Esophagus muscularis mucosa (tissue), 4 donors: ENCODE measurements at regions of chr19 and their contacts with region 1.

Region 1: DNA sequence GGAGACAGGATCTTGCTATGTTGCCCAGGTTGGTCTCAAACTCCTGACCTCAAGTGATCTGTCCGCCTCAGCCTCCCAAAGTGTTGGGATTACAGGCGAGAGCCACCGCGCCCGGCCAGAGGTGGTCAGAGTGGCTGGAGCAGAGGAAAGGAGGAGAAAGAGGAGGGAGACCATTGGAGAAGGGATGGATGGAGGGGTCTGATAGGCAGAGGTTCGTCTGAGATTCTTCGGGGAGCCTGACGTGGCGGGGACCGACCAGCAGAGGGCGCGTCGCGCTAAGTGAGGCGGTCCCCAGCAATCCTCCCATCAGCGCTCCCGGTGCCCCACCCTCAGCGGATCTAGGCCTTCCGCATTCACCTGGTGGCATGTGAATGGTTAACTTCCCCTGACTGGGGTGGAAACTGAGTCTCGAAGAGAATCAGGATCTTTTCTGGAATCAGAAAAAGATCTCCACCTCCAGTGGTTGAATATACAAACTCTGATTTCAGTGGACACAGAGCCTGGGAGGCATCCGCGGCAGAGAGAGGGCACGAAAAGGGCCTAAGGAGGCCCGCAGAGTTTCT is 8.8 kb downstream of the GTPBP3 start:
- DNase-seq: no peak
- H3K4me3 ChIP-seq: no peak overlapping the region
- H3K27ac ChIP-seq: peak overlapping the region; percentile 38 to 69 (median 50)
- H3K4me1 ChIP-seq: peaks cover 28 to 39% (median 33%) of the 10 kb centered on the region in 4 donors
- H3K27me3 ChIP-seq: peaks cover 0 to 22% (median 0%) of the 10 kb centered on the region in 4 donors
- CTCF ChIP-seq: peak in 2 of 3 experiments; percentile 91 to 96
- EP300 ChIP-seq: no peak
- POLR2A ChIP-seq: no peak

Region 2: DNA sequence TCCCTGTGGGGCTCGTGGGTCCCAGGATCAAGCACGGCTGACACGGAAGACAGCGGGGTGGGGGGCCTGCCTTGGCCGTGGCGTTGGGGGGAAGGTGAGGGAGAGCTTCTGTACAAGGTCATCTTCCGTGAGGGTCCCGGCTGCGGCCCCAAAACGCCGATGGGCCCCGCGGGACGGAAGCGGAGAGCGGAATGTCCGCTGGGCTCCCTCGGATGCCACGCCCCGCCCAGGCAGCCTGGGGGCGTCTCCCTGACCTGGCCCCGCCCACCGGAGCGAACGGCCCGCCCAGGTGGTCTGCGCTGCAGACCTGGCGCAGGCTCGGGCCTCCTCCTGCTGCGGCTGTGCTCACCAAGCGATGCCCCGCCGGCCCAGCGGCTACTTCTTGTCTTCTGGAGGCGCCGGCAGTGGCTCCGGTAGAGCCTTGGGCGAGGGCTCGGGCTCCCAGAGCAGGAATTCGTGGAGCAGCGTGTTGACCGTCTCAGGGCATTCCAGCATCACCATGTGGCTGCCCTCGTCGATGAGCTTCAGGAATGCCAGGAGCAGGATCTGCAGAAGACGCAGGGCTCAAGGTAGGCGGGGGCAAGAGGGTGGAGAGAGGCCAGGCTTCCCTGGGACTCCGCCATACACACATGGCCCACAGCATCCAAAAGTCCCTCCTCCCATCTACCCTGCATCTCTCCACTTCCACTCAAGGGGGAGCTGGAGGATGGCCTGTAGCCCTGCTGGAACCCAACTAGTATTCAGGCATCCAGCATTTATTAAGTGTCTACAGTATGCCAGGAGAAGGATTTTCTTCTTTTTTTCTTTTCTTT is 53.7 kb before region 1 on chr19:
- intact Hi-C with region 1: no loop called
- DNase-seq: peak; percentile 92
- H3K4me3 ChIP-seq: peak overlapping the region; percentile 58 to 65 (median 62)
- H3K27ac ChIP-seq: peak overlapping the region; percentile 78 to 90 (median 84)
- H3K4me1 ChIP-seq: peaks cover 0 to 34% (median 21%) of the 10 kb centered on the region in 4 donors
- H3K27me3 ChIP-seq: no peaks in the 10 kb centered on the region
- CTCF ChIP-seq: peak; percentile 66 to 84 (median 69)
- EP300 ChIP-seq: no peak
- POLR2A ChIP-seq: no peak

Region 3: GRCh38 chr19:17305517-17306284 is 40.5 kb before region 1 on chr19 and contains the start of gene MRPL34:
- intact Hi-C with region 1: no loop called
- DNase-seq: peak; percentile 98
- H3K4me3 ChIP-seq: peak within 1 kb of the TSS; percentile 64 to 93 (median 72)
- H3K27ac ChIP-seq: peak within 1 kb of the TSS; percentile 90 to 97 (median 91)
- H3K4me1 ChIP-seq: peaks cover 56 to 92% (median 85%) of the 10 kb centered on the region in 4 donors
- H3K27me3 ChIP-seq: peaks cover 0 to 9% (median 0%) of the 10 kb centered on the region in 4 donors
- CTCF ChIP-seq: peak; percentile 74 to 84 (median 80)
- EP300 ChIP-seq: no peak
- POLR2A ChIP-seq: no peak
- total RNA-seq, gene MRPL34: 131 to 173 (median 147) TPM

Region 4: GRCh38 chr19:17390665-17391370 is 44.6 kb after region 1 on chr19:
- intact Hi-C with region 1: loop called (anchors 2 kb)
- DNase-seq: peak; percentile 95
- H3K4me3 ChIP-seq: peak overlapping the region; percentile 44 to 61 (median 48)
- H3K27ac ChIP-seq: no peak overlapping the region
- H3K4me1 ChIP-seq: peaks cover 11 to 34% (median 30%) of the 10 kb centered on the region in 4 donors
- H3K27me3 ChIP-seq: peaks cover 0 to 76% (median 28%) of the 10 kb centered on the region in 4 donors
- CTCF ChIP-seq: peak; percentile 59 to 74 (median 73)
- EP300 ChIP-seq: no peak
- POLR2A ChIP-seq: no peak

Region 5: DNA sequence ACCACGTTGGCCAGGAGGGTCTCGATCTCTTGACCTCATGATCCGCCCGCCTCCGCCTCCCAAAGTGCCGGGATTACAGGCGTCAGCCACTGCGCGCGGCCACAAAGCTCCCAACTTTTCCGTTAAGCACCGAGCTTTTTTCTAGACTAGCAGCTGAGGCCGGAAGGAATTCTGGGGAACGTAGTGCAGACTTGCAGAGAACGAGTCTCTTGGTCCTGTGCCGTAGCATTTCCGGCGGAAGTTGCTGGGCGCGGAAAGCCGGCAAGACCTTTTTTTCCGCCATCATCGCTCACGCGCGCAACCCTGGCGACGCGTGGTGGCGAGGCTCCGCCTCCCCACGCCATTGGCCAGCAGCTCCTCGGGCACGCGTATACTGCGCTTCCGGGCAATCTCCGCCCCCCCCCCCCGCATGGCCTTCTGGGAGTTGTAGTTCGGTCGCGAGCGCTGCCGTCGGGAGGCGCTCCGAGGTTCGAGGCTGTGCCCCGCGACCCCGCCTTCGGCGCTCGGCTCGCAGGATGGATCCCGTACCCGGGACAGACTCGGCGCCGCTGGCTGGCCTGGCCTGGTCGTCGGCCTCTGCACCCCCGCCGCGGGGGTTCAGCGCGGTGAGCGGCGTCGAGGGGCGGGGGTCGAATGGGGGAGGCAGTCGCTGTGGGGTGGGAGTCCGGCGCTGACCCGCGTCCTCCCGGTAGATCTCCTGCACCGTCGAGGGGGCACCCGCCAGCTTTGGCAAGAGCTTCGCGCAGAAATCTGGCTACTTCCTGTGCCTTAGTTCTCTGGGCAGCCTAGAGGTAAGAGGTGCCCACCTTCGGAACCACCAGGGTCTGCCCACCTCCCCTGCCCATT is 73.7 kb after region 1 on chr19 and contains the start of gene MVB12A:
- intact Hi-C with region 1: no loop called
- DNase-seq: peak; percentile 99
- H3K4me3 ChIP-seq: peak within 1 kb of the TSS; percentile 68 to 89 (median 82)
- H3K27ac ChIP-seq: peak within 1 kb of the TSS; percentile 78 to 86 (median 80)
- H3K4me1 ChIP-seq: peaks cover 8 to 22% (median 20%) of the 10 kb centered on the region in 4 donors
- H3K27me3 ChIP-seq: peaks cover 0 to 19% (median 0%) of the 10 kb centered on the region in 4 donors
- CTCF ChIP-seq: no peak
- EP300 ChIP-seq: no peak
- POLR2A ChIP-seq: no peak
- total RNA-seq, gene MVB12A: 24.5 to 66.1 (median 56.1) TPM

Region 6: DNA sequence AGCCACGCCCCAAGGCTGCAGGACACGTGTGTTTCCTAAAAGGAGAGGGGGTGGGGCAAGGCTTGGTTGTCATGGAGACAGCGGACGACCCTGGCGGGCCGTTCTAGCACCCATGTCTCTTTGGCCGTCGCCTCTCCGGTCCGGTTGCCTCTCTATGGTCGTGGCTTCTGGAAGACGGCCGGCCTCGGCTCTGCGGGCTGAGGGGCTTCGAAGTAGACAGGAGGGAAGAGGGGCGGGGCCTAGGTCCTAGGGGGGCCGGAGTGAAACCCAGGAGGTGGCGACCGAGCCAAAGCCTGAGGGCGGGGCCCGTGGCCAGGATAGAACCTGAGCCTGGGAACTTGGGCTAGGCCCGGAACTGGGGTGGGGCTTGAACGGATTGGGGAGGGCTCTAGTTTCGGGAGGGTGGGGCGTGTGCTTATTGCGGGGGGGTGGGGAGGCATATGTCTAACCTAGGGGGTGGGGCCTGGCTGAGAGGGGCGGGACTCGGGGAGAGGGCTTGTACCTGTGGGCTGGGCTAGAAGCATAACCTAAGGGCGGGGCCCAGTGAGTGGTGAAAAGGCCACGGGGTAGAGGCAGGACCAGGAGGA is 123.4 kb after region 1 on chr19:
- intact Hi-C with region 1: loop called (anchors 5 kb)
- DNase-seq: peak; percentile 99
- H3K4me3 ChIP-seq: peak overlapping the region; percentile 63 to 94 (median 75)
- H3K27ac ChIP-seq: peak overlapping the region; percentile 87 to 94 (median 92)
- H3K4me1 ChIP-seq: peaks cover 28 to 57% (median 45%) of the 10 kb centered on the region in 4 donors
- H3K27me3 ChIP-seq: no peaks in the 10 kb centered on the region
- CTCF ChIP-seq: no peak
- EP300 ChIP-seq: no peak
- POLR2A ChIP-seq: no peak